ENCODE measurements at regions of chr16 and their contacts with region 1.

Region 1: DNA sequence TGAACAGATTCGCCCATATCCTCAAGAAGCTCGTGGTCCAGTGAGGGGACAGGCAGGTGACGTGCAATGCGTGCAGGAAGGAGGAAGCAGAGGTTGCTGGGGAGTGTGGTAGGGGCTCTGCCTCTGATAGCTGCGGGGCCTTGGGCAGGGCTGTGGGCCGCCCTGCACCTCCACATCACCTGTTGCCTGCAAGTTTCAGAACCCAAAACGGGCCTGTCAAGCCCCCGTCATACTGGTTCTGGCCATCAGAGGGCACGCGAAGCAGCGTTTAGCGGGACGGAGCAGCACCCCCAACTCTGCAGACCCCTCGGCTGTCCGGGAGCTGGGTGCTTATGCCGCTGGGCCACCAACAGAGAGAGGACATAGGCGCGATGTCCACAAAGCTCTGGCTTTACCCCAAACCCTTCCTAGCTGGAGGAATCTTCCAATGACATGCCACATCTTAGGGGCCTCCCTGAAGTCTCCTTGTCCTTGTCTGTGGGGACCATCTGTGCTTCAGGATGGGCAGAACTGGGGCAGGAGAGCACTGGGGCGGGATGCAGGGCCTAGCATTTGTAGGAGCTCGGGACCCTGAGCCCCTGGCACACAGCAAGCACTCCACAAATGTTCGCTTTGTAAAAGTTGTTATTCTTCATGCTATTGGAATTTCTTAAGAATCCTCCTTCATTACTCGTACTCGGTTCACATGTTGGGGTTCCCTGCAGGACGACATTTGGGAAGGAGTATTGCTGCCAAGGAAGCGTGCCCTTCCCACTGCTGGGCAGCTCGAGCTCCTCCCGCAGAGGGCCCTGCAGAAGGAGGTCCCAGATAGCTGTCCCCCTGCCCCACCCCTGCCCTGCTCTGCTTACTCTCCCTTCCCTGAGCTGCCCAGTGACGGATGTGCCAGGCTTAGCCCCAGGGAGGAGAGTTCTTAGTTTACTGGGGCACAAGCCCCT is 64.3 kb downstream of the CNGB1 start:
- DNase-seq: no peak
- ATAC-seq: peak; percentile 52

Region 2: DNA sequence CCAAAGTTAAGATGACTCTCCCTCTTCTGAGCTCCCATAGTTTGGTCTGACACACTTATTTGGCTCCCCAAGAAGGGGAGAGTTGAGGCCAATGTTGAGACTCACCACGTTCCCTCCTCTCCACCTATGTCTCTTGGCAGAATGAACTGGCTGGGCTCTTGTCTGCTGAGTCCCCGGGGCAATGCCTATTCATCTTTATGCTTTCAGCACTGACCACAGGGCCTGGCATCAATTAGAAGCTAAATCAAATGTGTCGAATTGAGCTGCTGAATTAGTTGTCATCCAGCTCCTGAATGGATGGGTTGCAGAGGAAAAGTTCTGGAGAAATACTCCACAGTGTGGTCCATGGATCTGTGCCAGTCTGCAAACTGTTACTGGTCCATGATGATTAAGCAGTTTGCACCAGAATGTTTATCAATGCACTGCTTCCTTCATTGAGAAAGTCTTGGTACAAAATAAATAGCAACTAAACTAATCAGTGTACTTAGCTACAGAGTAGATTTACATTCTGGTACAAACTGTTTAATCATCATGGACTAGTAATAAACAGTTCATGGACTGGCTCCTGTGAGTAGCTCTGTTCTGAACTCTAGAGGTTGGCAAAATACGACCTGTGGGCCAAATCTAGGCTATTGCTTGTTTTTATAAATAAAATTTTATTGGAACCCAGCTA is 59.6 kb after region 1 on chr16:
- intact Hi-C with region 1: no loop called
- DNase-seq: no peak
- ATAC-seq: no peak

Region 3: DNA sequence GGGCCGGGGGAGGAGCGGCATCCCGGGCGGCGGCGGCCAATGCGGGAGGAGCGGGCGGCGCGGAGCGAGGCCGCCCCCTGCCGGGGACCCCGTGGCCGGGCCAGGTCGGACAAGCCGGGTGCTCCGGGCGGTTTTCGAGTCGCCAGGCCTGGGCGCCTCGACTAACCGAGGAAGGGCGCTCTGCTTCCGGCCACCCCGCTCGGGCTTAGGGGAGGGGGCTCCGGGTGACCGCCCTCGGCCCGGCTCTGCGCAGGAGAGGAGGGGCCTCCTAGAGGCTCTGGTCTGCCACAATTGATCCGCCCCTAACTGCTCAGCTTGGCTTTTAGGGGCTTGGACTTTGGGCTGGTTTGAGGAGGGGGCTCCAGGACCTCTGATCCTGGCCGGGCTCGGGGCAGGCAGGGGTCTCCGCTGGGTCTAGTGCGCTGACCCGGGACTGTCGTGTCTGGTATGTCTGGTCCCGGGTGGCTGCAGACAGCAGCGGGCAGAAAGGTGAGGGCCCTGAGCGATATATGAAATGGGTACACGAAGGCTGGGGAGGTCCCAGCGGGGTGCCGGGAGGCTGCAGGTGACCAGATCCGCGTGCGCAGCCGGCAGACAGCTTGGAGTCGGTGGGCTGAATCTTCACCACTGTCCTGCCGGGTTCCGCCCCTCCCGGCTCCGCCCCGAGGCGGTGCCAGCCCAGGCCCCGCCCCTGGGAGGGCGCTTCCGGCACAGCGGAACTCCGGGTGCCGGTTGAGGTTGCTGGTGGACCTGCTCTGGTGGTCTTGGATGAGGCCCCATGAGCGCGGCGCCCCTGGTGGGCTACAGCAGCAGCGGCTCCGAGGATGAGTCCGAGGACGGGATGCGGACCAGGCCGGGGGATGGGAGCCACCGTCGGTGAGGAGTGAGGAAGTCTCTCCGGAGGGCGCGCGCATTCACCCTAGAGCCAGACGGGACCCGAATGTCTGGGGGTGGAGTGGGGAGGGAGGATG is 94.3 kb after region 1 on chr16 and contains the start of gene USB1:
- intact Hi-C with region 1: loop called (anchors 5 kb)
- DNase-seq: peak; percentile 93
- ATAC-seq: peak; percentile 96
- total RNA-seq, gene USB1: 25.9 TPM

Measured in sciatic nerve (tissue), 2 donors.